HEK293 (cell line): ENCODE measurements at regions of chr2 and their contacts with region 1.

Region 1: GRCh38 chr2:172931918-172932520 is 143.6 kb upstream of the MAP3K20 start:
- H3K4me3 ChIP-seq: no peak overlapping the region
- H3K27ac ChIP-seq: no peak overlapping the region
- H3K4me1 ChIP-seq: peaks cover 27% of the 10 kb centered on the region
- CTCF ChIP-seq: no peak; the same call in 1 of the 2 replicates

Region 2: GRCh38 chr2:172806493-172806892 is 125.5 kb before region 1 on chr2:
- CTCF ChIA-PET with region 1: interaction called, 154 read pairs
- POLR2A ChIA-PET with region 1: no interaction called
- H3K4me3 ChIP-seq: no peak overlapping the region
- H3K27ac ChIP-seq: no peak overlapping the region
- H3K4me1 ChIP-seq: 0 out of 2 replicates have a peak, but pooled peaks cover 3% of the 10 kb centered on the region
- CTCF ChIP-seq: peak; percentile 71

Region 3: GRCh38 chr2:172829229-172829628 is 102.8 kb before region 1 on chr2:
- CTCF ChIA-PET with region 1: interaction called, 20 read pairs
- POLR2A ChIA-PET with region 1: interaction called, 6 read pairs
- H3K4me3 ChIP-seq: no peak overlapping the region
- H3K27ac ChIP-seq: no peak overlapping the region
- H3K4me1 ChIP-seq: no peaks in the 10 kb centered on the region
- CTCF ChIP-seq: no peak

Region 4: DNA sequence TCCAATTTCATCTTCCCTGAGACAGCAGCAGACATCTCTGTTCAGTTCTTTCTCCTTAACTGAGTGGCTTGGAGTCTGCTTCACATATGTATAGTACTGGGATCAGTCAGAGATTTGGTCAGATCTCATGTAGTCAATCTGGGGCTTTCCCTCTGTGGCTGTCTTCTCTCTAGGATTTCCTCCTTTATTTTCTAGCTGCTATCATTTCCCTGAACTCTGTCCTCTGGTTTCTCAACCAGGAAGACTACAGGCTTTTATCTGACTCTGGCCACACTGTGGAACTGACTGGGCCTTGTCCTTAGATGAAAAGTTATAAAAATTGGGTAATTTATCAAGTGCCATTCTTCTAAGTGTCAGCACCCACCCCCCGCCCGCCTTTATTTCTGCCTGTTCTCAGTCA is 75.4 kb before region 1 on chr2:
- CTCF ChIA-PET with region 1: interaction called, 22 read pairs
- POLR2A ChIA-PET with region 1: no interaction called
- H3K4me3 ChIP-seq: no peak overlapping the region
- H3K27ac ChIP-seq: no peak overlapping the region
- H3K4me1 ChIP-seq: peaks cover 17% of the 10 kb centered on the region
- CTCF ChIP-seq: no peak

Region 5: GRCh38 chr2:172901913-172902312 is 30.1 kb before region 1 on chr2:
- CTCF ChIA-PET with region 1: interaction called, 12 read pairs
- POLR2A ChIA-PET with region 1: no interaction called
- H3K4me3 ChIP-seq: no peak overlapping the region
- H3K27ac ChIP-seq: no peak overlapping the region
- H3K4me1 ChIP-seq: no peaks in the 10 kb centered on the region
- CTCF ChIP-seq: no peak